ENCODE measurements at regions of chr22 and their contacts with region 1.

Region 1: GRCh38 chr22:30763815-30764686 is 69.4 kb downstream of the OSBP2 start:
- DNase-seq: peak in 4 of 6 donors; percentile 26 to 63 (median 35)
- ATAC-seq: peak; percentile 76 to 97 (median 89)
- H3K4me3 ChIP-seq: no peak overlapping the region
- H3K27ac ChIP-seq: no peak overlapping the region
- H3K4me1 ChIP-seq: no peaks in the 10 kb centered on the region
- H3K27me3 ChIP-seq: no peaks in the 10 kb centered on the region
- CTCF ChIP-seq: peak in 2 of 4 donors; percentile 31 to 38

Region 2: GRCh38 chr22:30265823-30266444 is 498.1 kb before region 1 on chr22:
- intact Hi-C with region 1: no loop called
- DNase-seq: peak in 2 of 6 donors; percentile 58 to 65
- ATAC-seq: peak in 3 of 4 donors; percentile 24 to 51 (median 48)
- H3K4me3 ChIP-seq: peak overlapping the region in 1 of 4 donors; percentile 32
- H3K27ac ChIP-seq: peak overlapping the region in 2 of 4 donors; percentile 62 to 68
- H3K4me1 ChIP-seq: no peaks in the 10 kb centered on the region
- H3K27me3 ChIP-seq: no peaks in the 10 kb centered on the region
- CTCF ChIP-seq: no peak

Region 3: DNA sequence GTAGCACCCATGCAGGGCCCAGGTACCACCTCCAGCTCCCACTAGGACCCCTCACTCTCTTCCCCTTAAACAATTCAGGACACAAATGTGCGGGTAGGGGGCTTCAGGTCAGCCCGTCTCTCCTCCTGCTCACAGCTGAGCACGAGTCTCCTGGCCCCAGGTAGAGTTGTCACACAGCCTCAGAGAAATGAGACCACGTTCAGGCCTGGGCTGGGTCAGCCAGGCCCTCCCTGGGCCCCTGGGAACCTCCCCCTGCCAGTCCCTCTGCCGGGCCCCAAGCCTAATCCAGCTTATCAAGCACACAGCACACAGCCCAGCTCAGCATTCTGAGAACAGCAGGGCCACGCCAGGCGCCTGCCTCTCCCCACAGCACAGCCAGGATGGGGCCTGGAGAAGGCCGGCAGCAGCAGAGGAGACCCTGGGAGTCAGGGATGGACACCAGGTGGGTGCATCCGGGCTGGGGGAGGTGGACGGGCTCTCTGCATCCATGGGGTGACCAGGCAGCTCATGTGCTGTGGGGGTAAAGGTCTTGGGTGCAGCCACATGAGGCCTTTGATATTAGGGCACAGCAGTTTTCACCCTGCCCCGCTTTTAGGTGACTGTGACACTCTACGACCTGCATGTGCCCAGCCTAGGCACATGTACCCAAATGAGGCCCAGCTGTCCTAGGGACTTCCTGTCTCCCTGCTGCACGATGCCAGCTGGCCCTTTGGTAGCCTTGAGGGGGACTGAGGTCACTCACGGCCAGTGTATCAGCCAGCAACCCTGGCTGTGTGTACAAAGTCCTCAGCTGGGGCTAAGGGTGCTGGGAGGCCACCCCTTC is 117.5 kb after region 1 on chr22:
- intact Hi-C with region 1: loop called in 1 of 3 experiments (anchors 10 kb)
- DNase-seq: peak in 2 of 6 donors; percentile 27 to 37
- ATAC-seq: peak; percentile 13 to 74 (median 46)
- H3K4me3 ChIP-seq: no peak overlapping the region
- H3K27ac ChIP-seq: no peak overlapping the region
- H3K4me1 ChIP-seq: no peaks in the 10 kb centered on the region
- H3K27me3 ChIP-seq: no peaks in the 10 kb centered on the region
- CTCF ChIP-seq: no peak

Region 4: DNA sequence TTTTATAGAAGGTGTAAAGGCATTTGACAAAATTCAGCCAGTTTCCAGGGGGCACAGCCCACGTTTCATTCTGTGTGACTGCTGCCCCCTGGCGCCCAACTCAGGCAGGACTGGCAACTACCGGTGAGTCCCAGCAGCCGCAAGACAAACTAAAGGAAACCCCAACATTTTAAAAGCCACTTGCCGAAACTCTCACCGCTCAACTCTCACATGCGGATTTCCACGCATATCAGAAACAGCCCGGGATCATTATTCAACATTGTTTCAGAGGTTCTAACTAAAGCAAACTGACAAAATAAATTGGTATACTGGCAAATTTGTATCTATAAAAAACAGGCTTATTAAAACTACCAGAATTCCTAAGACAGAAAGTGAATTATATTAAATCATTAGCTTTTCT is 156.4 kb after region 1 on chr22:
- intact Hi-C with region 1: loop called in 1 of 3 experiments (anchors 10 kb)
- DNase-seq: peak; percentile 52 to 93 (median 74)
- ATAC-seq: peak; percentile 76 to 84 (median 83)
- H3K4me3 ChIP-seq: peak overlapping the region in 1 of 4 donors; percentile 43
- H3K27ac ChIP-seq: no peak overlapping the region
- H3K4me1 ChIP-seq: peaks cover 0 to 5% (median 4%) of the 10 kb centered on the region in 3 donors
- H3K27me3 ChIP-seq: no peaks in the 10 kb centered on the region
- CTCF ChIP-seq: peak; percentile 74 to 87 (median 86)